Aorta (tissue), 5 donors: ENCODE measurements at regions of chr2 and their contacts with region 1.

Region 1: DNA sequence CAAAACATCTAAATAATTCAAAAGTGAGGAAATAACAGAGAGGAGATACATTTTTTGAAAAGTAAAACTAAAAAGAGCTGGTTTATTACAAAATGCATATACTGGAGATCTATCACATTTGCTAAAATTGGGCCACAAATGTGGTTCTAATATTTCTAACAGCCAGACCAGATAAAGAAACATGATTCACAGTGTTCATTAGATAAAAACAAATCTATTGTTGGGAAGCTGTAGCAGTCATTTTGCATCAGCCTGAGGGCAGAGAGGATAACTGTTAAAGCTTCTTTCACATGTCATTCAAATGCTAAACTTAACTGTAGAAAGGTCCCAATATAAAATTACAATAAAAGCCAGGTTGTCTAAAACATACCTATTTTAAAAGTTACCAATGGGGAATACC is 148.3 kb downstream of the GULP1 start:
- DNase-seq: no peak
- ATAC-seq: no peak
- H3K4me3 ChIP-seq: no peak overlapping the region
- H3K27ac ChIP-seq: no peak overlapping the region
- H3K4me1 ChIP-seq: no peaks in the 10 kb centered on the region
- H3K27me3 ChIP-seq: no peaks in the 10 kb centered on the region

Region 2: DNA sequence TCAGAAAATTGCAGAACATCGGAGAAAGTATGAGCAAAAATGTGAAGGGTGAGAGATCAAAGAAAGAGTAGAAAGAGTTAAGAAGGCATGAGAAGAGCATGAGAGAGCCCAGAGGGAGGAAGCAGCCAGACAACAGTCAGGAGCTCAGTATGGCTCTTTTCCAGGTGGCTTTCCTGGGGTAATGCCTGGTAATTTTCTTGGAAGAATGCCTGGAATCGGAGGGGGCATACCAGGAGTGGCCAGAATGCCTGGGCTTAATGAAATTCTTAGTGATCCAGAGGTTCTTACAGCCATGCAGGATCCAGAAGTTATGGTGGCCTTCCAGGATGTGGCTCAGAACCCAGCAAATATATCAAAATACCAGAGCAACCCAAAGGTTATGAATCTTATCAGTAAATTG is 614.0 kb before region 1 on chr2:
- intact Hi-C with region 1: no loop called
- DNase-seq: no peak
- ATAC-seq: no peak
- H3K4me3 ChIP-seq: no peak overlapping the region
- H3K27ac ChIP-seq: no peak overlapping the region
- H3K4me1 ChIP-seq: peaks cover 0 to 3% of the 10 kb centered on the region in 2 donors
- H3K27me3 ChIP-seq: no peaks in the 10 kb centered on the region

Region 3: DNA sequence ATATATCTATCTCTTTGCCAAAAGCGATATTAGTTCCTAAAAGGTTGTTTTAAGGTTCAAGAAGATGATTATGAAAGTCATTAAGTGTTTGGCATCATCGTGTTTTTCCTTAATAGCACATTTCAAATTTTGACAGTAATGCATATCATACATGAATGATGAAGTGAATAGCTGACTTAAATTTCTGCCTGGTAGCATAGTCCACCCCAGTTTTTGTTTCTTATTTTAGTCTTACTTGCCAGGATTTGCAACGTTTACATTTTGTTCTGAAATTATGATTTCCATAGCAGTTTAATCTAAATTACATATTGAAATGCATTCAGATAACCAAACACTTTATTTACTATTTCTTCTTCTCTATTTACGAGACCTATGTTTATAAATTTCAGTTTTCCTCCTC is 52.8 kb after region 1 on chr2:
- intact Hi-C with region 1: no loop called
- DNase-seq: no peak
- ATAC-seq: no peak
- H3K4me3 ChIP-seq: no peak overlapping the region
- H3K27ac ChIP-seq: no peak overlapping the region
- H3K4me1 ChIP-seq: peaks cover 0 to 2% of the 10 kb centered on the region in 2 donors
- H3K27me3 ChIP-seq: no peaks in the 10 kb centered on the region

Region 4: GRCh38 chr2:188506843-188507242 is 66.9 kb after region 1 on chr2:
- intact Hi-C with region 1: loop called in 1 of 2 experiments (anchors 5 kb)
- DNase-seq: no peak
- ATAC-seq: no peak
- H3K4me3 ChIP-seq: no peak overlapping the region
- H3K27ac ChIP-seq: peak overlapping the region in 1 of 2 donors; percentile 28
- H3K4me1 ChIP-seq: peaks cover 0 to 4% of the 10 kb centered on the region in 2 donors
- H3K27me3 ChIP-seq: no peaks in the 10 kb centered on the region

Region 5: DNA sequence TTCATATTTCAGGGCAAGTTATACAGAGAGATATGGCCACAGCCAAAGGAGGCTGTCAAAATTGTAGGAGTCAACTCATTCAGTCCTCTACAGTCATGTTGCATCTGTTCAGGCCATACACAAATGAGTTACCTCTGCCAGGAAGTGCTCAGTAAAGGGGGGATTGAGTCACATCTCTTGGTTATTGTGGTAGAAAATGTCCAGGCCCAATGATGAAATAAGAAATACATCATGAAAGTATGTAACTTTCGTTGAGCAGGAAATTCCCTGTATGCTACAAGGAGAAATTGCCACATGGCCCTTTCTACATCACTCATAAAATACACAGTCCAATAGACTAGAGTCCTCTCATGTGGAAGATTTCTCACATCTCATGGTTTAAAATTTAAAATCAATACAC is 430.3 kb after region 1 on chr2:
- intact Hi-C with region 1: no loop called
- DNase-seq: no peak
- ATAC-seq: no peak
- H3K4me3 ChIP-seq: no peak overlapping the region
- H3K27ac ChIP-seq: peak overlapping the region; percentile 44 to 57
- H3K4me1 ChIP-seq: peaks cover 6 to 12% of the 10 kb centered on the region in 2 donors
- H3K27me3 ChIP-seq: no peaks in the 10 kb centered on the region